Ascending aorta (tissue), 2 donors: ENCODE measurements at regions of chr9 and their contacts with region 1.

Region 1: GRCh38 chr9:72952914-72953313 is at the start of gene ALDH1A1:
- DNase-seq: no peak
- H3K4me3 ChIP-seq: peak within 1 kb of the TSS; percentile 51 to 69
- H3K27ac ChIP-seq: peak within 1 kb of the TSS; percentile 76 to 91
- H3K4me1 ChIP-seq: peaks cover 0 to 4% of the 10 kb centered on the region in 2 donors
- H3K27me3 ChIP-seq: no peaks in the 10 kb centered on the region
- CTCF ChIP-seq: no peak
- total RNA-seq, gene ALDH1A1: 43.9 TPM

Region 2: GRCh38 chr9:72856972-72857623 is 95.8 kb before region 1 on chr9:
- intact Hi-C with region 1: loop called (anchors 5 kb)
- DNase-seq: peak in 1 of 2 donors; percentile 73
- H3K4me3 ChIP-seq: no peak overlapping the region
- H3K27ac ChIP-seq: peak overlapping the region in 1 of 2 donors; percentile 36
- H3K4me1 ChIP-seq: peaks cover 0 to 9% of the 10 kb centered on the region in 2 donors
- H3K27me3 ChIP-seq: no peaks in the 10 kb centered on the region
- CTCF ChIP-seq: peak; percentile 58 to 74 (median 64)

Region 3: DNA sequence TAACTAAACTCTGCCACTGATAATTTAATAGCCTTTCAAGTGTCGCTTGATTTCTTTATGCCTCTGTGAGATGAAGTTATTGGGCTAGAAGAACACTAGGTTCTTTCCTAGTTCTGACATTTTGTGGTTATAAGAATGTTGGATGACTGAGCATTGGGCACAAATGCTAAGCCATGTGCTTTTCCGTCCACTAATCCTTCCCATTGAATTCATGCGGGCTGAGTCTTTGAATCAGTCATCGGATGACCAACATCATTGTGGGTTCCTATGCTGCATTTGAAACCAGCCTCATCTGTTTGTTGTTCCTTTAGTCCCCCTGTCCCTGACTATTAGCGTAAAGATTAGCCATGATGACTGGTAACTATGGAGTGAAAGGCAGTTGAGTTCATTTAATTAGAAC is 58.6 kb before region 1 on chr9:
- intact Hi-C with region 1: no loop called
- DNase-seq: no peak
- H3K4me3 ChIP-seq: no peak overlapping the region
- H3K27ac ChIP-seq: no peak overlapping the region
- H3K4me1 ChIP-seq: no peaks in the 10 kb centered on the region
- H3K27me3 ChIP-seq: no peaks in the 10 kb centered on the region
- CTCF ChIP-seq: no peak

Region 4: DNA sequence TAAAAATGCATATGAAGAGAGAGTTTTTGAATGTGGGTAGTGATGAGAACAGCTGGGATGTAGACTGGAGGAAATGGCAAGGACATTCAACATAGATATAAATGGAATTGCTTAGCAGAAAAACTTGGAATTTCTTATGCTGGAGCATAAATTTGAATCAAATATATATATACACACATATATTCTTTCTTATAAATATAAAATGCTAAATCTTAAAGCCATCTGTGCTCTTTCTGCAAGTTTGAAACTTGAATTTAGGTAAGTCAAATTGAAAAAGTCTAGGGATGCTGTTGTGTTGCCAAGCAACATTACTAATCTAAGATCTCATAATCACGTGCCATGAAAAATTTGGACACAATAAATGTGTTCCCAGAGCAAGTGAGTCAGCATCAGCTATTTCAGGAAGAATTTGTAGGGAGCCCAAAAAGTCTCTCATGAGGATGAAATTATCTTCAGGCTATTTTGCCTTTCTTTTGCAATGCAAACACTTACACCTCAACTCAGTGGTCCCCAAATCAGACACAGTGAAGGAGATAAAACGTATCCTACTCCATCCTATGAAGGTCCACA is 58.4 kb after region 1 on chr9:
- intact Hi-C with region 1: loop called (anchors 2 kb)
- DNase-seq: no peak
- H3K4me3 ChIP-seq: no peak overlapping the region
- H3K27ac ChIP-seq: peak overlapping the region; percentile 77 to 81
- H3K4me1 ChIP-seq: peaks cover 0 to 11% of the 10 kb centered on the region in 2 donors
- H3K27me3 ChIP-seq: no peaks in the 10 kb centered on the region
- CTCF ChIP-seq: no peak

Region 5: DNA sequence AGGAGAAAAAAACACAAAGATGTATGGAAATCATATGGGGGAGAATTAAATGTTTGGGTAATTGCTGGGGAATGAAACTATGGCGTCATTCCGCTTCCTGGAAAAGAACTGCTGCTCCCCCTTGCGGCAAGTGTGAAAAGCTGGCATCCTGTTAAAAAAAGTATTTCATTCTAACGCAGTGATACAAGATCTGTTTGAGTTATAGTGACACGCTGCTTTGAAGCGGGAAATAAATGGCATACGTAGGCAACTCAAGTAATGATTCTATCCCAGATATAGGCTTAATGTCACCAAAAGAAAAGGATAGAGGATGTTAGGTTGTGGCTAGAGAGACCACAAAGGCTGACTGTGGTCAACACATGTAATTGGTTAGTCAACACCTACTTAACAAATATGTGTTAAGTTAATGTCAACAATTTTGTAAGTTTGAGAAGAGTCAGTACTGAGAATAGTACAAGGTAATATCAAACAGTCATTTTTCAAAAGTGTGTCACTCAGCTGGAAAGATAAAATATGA is 70.2 kb after region 1 on chr9:
- intact Hi-C with region 1: loop called (anchors 2 kb)
- DNase-seq: peak in 1 of 2 donors; percentile 68
- H3K4me3 ChIP-seq: no peak overlapping the region
- H3K27ac ChIP-seq: no peak overlapping the region
- H3K4me1 ChIP-seq: no peaks in the 10 kb centered on the region
- H3K27me3 ChIP-seq: no peaks in the 10 kb centered on the region
- CTCF ChIP-seq: peak; percentile 79 to 86 (median 84)

Region 6: DNA sequence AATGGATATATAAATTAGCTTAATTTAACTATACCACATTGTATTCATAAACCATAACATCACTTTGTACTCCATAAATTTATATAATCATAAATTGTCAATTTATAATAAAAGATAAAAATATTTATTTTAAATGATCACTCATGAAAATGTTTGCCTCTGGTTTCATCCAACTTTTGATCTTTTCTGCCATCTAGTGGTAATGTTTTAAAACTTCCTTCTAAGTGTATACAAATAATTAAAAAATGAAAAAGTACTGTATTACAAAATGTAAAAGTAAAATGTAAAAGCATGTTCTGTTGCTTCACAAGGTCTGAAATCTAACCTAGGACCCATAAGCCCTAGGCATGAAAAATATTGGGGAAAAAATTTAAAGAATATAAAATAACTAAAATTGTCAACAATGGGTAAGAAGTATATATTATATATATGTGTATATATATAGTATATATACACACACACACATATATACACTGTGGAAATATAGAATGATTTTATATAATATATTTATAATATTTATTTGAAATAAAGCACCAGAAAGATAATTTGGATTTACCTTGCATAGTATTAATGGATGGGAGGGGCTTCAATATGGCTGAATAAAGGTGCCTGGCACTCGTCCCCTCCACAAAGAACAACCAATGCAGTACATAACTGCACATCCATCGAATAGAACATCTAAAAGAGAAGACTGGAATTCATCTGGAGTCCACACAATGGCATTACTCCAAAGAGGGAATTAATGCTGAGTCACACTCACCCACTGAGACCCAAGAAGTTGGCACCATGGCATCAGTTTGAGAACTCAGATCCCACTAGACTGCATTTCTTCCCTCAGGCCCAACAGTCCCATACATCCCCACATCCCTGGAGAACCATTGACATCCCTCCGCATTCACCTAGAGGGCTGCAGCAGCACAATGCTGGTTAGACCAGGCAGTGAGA is 231.3 kb after region 1 on chr9:
- intact Hi-C with region 1: loop called (anchors 10 kb)
- DNase-seq: no peak
- H3K4me3 ChIP-seq: no peak overlapping the region
- H3K27ac ChIP-seq: no peak overlapping the region
- H3K4me1 ChIP-seq: peaks cover 0 to 10% of the 10 kb centered on the region in 2 donors
- H3K27me3 ChIP-seq: no peaks in the 10 kb centered on the region
- CTCF ChIP-seq: peak; percentile 38 to 59 (median 51)